ENCODE measurements at regions of chr2 and their contacts with region 1.

Region 1: DNA sequence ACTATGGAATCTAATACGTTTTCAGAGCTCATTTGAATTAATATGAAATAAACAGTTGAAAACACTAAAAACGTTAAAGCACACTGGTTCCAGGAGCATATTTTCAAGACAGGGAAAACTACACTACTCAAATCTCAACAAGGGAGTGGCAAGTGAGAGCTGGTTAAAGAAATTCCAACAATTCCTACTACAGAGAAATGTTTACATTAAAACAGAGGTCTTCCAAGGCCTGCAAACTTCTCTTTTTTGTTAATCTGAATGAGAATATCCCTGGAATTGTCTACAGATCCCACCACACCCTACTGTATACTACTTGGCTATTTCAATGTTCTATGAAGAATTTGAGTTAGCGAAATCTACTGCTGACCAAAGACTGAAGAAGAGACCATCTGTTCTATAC is 231.5 kb downstream of the ZEB2 start:
- DNase-seq: no peak
- ATAC-seq: no peak
- H3K4me3 Mint-ChIP-seq: no peak overlapping the region
- H3K27ac Mint-ChIP-seq: no peak overlapping the region
- H3K4me1 Mint-ChIP-seq: no peaks in the 10 kb centered on the region
- H3K27me3 Mint-ChIP-seq: no peaks in the 10 kb centered on the region

Region 2: DNA sequence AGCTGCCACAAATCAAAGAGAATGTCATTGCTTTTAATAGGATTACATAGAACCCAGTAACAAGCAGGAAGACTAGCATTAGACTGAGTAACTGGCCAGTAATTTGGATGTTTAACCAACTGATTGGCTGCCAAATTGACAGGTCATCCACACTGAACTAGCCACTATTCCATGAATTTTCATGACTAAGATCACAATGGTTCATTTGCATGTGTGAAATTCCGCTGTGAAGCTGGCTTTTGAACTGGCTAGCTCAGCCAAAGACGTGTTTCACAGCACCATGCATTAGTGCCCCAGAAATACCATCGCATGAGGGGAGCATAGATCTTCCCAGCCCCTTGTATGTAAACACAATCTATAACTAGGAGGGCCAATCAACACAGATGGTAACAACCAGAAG is 509.4 kb before region 1 on chr2:
- CTCF ChIA-PET with region 1: no interaction called
- POLR2A ChIA-PET with region 1: no interaction called
- intact Hi-C with region 1: no loop called
- DNase-seq: no peak
- ATAC-seq: no peak
- H3K4me3 Mint-ChIP-seq: no peak overlapping the region
- H3K27ac Mint-ChIP-seq: no peak overlapping the region
- H3K4me1 Mint-ChIP-seq: no peaks in the 10 kb centered on the region
- H3K27me3 Mint-ChIP-seq: no peaks in the 10 kb centered on the region

Region 3: GRCh38 chr2:144374163-144374661 is 85.8 kb after region 1 on chr2:
- CTCF ChIA-PET with region 1: no interaction called
- POLR2A ChIA-PET with region 1: interaction called, 12 read pairs
- intact Hi-C with region 1: no loop called
- DNase-seq: no peak
- ATAC-seq: peak; percentile 74
- H3K4me3 Mint-ChIP-seq: no peak overlapping the region
- H3K27ac Mint-ChIP-seq: peak overlapping the region; percentile 35
- H3K4me1 Mint-ChIP-seq: peaks cover 34% of the 10 kb centered on the region
- H3K27me3 Mint-ChIP-seq: peaks cover 10% of the 10 kb centered on the region

Measured in activated CD4-positive, alpha-beta T cell treated with anti-CD3 and anti-CD28 coated beads for 36 hours (primary cell).